CD14-positive monocyte (primary cell): ENCODE measurements at regions of chr12 and their contacts with region 1.

Region 1: DNA sequence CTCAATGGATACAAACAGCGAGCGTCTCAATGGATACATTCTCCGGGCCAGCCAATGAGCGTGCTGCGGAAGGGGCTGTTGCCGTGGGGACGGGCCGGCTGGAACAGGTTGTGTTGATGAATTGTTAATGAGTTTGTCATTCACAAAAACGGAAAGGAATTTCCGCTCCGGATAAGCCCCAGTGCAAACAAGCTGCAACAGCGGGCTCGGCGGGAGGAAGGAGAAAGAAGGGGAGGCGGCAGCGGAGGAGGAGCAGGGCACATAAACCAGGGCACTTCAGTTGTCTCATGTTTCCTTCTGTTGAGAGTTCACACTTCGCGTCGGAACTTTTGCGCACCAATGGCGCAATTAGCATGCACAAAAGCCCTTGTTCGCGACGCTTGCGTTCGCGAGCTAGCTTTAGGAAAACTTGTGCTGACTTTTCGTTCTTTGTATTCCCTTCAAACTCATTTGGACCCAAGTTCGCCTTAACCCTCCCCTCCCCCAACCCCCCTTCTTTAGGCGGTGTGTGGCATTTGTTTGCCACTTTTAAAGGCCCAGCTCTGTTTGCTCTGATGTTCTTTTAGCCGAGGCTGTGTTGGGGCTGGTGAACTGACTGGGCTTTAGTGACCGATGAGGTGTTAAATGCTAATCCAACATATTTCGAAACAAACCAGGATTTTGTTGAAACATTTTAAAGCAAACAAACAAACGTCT is at the start of gene DUSP6:
- DNase-seq: peak; percentile 96 to 98 (median 97)
- H3K4me3 ChIP-seq: peak within 1 kb of the TSS; percentile 85 to 99 (median 98)
- H3K4me3 Mint-ChIP-seq: peak within 1 kb of the TSS; percentile 99 to 100
- H3K27ac ChIP-seq: peak within 1 kb of the TSS; percentile 89 to 96
- H3K27ac Mint-ChIP-seq: peak within 1 kb of the TSS; percentile 91 to 98 (median 97)
- H3K4me1 ChIP-seq: peaks cover 38 to 55% of the 10 kb centered on the region in 2 donors
- H3K4me1 Mint-ChIP-seq: peaks cover 44% of the 10 kb centered on the region
- H3K27me3 ChIP-seq: no peaks in the 10 kb centered on the region
- H3K27me3 Mint-ChIP-seq: no peaks in the 10 kb centered on the region
- CTCF ChIP-seq: no peak
- polyA plus RNA-seq, gene DUSP6: 195 to 880 (median 653) TPM

Region 2: DNA sequence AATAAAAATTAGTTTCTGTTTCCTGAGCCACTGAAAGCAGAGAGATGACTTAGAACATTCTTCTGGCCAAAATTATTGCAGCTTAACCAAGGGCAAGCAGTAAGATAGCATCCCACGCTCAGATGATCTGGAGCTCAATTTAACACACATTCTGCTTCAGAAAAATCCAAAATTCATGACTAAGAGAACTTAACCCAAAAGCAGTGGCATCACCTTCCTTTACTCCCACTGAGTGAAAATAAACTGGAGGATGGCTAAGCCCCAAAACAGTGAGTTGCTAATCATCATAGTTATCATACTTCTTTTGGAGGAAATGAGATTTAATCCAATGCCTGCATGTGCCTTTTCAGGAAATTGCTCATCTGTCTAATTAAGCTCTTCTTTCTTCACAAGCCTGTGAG is 195.8 kb before region 1 on chr12:
- intact Hi-C with region 1: loop called (anchors 2 to 5 kb)
- DNase-seq: peak; percentile 78 to 92 (median 86)
- H3K4me3 ChIP-seq: peak overlapping the region in 1 of 3 experiments; percentile 29
- H3K4me3 Mint-ChIP-seq: peak overlapping the region in 1 of 2 donors; percentile 53
- H3K27ac ChIP-seq: peak overlapping the region; percentile 35 to 98
- H3K27ac Mint-ChIP-seq: peak overlapping the region; percentile 97 to 99 (median 98)
- H3K4me1 ChIP-seq: peaks cover 75 to 79% of the 10 kb centered on the region in 2 donors
- H3K4me1 Mint-ChIP-seq: peaks cover 46% of the 10 kb centered on the region
- H3K27me3 ChIP-seq: no peaks in the 10 kb centered on the region
- H3K27me3 Mint-ChIP-seq: no peaks in the 10 kb centered on the region
- CTCF ChIP-seq: no peak

Region 3: GRCh38 chr12:89244536-89244935 is 108.1 kb before region 1 on chr12:
- intact Hi-C with region 1: loop called in 1 of 2 experiments (anchors 10 kb)
- DNase-seq: peak; percentile 84 to 95 (median 90)
- H3K4me3 ChIP-seq: peak overlapping the region in 1 of 3 experiments; percentile 45
- H3K4me3 Mint-ChIP-seq: peak overlapping the region; percentile 20 to 61
- H3K27ac ChIP-seq: peak overlapping the region; percentile 14 to 93
- H3K27ac Mint-ChIP-seq: peak overlapping the region; percentile 86 to 95 (median 91)
- H3K4me1 ChIP-seq: peaks cover 32 to 33% of the 10 kb centered on the region in 2 donors
- H3K4me1 Mint-ChIP-seq: peaks cover 38% of the 10 kb centered on the region
- H3K27me3 ChIP-seq: no peaks in the 10 kb centered on the region
- H3K27me3 Mint-ChIP-seq: no peaks in the 10 kb centered on the region
- CTCF ChIP-seq: no peak

Region 4: GRCh38 chr12:89389755-89390661 is 37.4 kb after region 1 on chr12:
- intact Hi-C with region 1: loop called (anchors 5 kb)
- DNase-seq: peak; percentile 40 to 53 (median 44)
- H3K4me3 ChIP-seq: peak overlapping the region in 1 of 3 experiments; percentile 10
- H3K4me3 Mint-ChIP-seq: peak overlapping the region in 1 of 2 donors; percentile 22
- H3K27ac ChIP-seq: peak overlapping the region in 1 of 2 donors; percentile 65
- H3K27ac Mint-ChIP-seq: peak overlapping the region; percentile 43 to 92 (median 86)
- H3K4me1 ChIP-seq: peaks cover 54 to 56% of the 10 kb centered on the region in 2 donors
- H3K4me1 Mint-ChIP-seq: peaks cover 51% of the 10 kb centered on the region
- H3K27me3 ChIP-seq: no peaks in the 10 kb centered on the region
- H3K27me3 Mint-ChIP-seq: peaks cover 0 to 6% (median 2%) of the 10 kb centered on the region in 3 donors
- CTCF ChIP-seq: no peak

Region 5: GRCh38 chr12:89524541-89525285 is 172.1 kb after region 1 on chr12 and contains the start of gene GALNT4:
- intact Hi-C with region 1: loop called in 1 of 2 experiments (anchors 5 kb)
- DNase-seq: peak; percentile 80 to 86 (median 85)
- H3K4me3 ChIP-seq: peak within 1 kb of the TSS; percentile 80 to 91 (median 90)
- H3K4me3 Mint-ChIP-seq: peak within 1 kb of the TSS; percentile 98 to 99
- H3K27ac ChIP-seq: peak within 1 kb of the TSS; percentile 79 to 85
- H3K27ac Mint-ChIP-seq: peak within 1 kb of the TSS; percentile 89 to 96 (median 94)
- H3K4me1 ChIP-seq: peaks cover 37 to 52% of the 10 kb centered on the region in 2 donors
- H3K4me1 Mint-ChIP-seq: peaks cover 54% of the 10 kb centered on the region
- H3K27me3 ChIP-seq: no peaks in the 10 kb centered on the region
- H3K27me3 Mint-ChIP-seq: no peaks in the 10 kb centered on the region
- CTCF ChIP-seq: peak; percentile 70
- polyA plus RNA-seq, gene GALNT4: 3.7 to 12.9 (median 10.7) TPM